ENCODE measurements at regions of chr16 and their contacts with region 1.

Region 1: DNA sequence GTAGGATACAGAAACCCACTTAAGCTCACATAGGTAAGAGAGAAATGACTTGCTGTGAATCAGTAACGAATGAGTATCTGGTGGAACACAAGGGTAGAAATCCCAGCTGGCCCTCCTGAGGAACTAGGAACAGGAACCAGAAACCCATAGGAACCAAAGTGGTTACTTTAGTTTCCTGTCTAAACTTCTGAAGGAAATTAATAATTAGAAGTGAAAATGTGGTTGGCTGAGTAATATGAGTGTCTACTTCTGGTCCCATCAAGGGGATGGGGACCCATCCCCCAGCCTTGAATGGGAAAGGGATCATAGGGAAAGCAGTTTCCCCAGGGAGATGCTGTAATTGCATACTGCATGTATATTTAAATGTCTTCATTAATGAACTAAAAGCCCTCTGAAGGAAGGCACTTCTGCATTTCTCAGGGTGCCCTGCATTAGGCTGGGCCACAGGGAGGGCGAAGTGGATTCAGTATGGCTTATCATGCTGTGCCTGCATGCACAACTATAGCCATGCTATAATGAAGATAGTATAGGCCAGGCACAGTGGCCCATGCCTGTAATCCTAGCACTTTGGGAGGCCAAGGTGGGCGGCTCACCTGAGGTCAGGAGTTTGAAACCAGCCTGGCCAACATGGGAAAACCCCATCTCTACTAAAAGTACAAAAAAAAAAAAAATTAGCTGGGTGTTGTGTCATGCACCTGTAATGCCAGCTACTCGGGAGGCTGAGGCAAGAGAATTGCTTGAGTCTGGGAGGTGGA is 45.6 kb downstream of the CYB5B start:
- DNase-seq: no peak
- ATAC-seq: no peak
- H3K4me3 ChIP-seq: no peak overlapping the region
- H3K4me3 Mint-ChIP-seq: no peak overlapping the region
- H3K27ac ChIP-seq: no peak overlapping the region
- H3K27ac Mint-ChIP-seq: peak overlapping the region in 1 of 2 donors; percentile 39
- H3K4me1 ChIP-seq: peaks cover 0 to 12% of the 10 kb centered on the region in 2 experiments
- H3K4me1 Mint-ChIP-seq: peaks cover 8 to 43% (median 34%) of the 10 kb centered on the region in 3 donors
- H3K27me3 ChIP-seq: no peaks in the 10 kb centered on the region
- H3K27me3 Mint-ChIP-seq: no peaks in the 10 kb centered on the region

Region 2: GRCh38 chr16:68800257-68800875 is 669.6 kb before region 1 on chr16:
- CTCF ChIA-PET with region 1: no interaction called
- POLR2A ChIA-PET with region 1: interaction called in 1 of 2 experiments, 18 read pairs
- DNase-seq: peak in 31 of 35 experiments; percentile 3 to 52 (median 24)
- ATAC-seq: peak in 3 of 4 experiments; percentile 51 to 75 (median 71)
- H3K4me3 ChIP-seq: no peak overlapping the region
- H3K4me3 Mint-ChIP-seq: no peak overlapping the region
- H3K27ac ChIP-seq: no peak overlapping the region
- H3K27ac Mint-ChIP-seq: no peak overlapping the region
- H3K4me1 ChIP-seq: no peaks in the 10 kb centered on the region
- H3K4me1 Mint-ChIP-seq: no peaks in the 10 kb centered on the region
- H3K27me3 ChIP-seq: no peaks in the 10 kb centered on the region
- H3K27me3 Mint-ChIP-seq: no peaks in the 10 kb centered on the region

Region 3: DNA sequence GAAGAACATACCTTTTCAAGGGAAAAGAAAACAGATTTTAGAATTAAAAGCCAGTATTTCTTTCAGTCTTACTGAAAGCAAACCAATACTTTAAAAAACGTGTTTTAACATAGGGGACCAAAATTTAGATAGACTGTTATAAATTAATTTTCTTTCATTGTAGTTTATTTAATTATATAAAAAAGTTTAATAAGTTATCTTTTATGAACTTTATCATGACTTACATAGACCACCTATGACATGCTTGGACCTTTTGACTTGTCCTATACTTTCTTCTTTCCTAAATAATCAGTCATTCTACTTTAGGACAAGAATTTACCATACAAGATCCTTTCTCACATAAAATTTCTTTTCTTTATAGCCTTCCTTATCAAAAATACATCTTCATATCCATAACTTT is 466.5 kb before region 1 on chr16:
- CTCF ChIA-PET with region 1: no interaction called
- POLR2A ChIA-PET with region 1: no interaction called
- DNase-seq: no peak
- ATAC-seq: no peak
- H3K4me3 ChIP-seq: no peak overlapping the region
- H3K4me3 Mint-ChIP-seq: no peak overlapping the region
- H3K27ac ChIP-seq: no peak overlapping the region
- H3K27ac Mint-ChIP-seq: no peak overlapping the region
- H3K4me1 ChIP-seq: no peaks in the 10 kb centered on the region
- H3K4me1 Mint-ChIP-seq: no peaks in the 10 kb centered on the region
- H3K27me3 ChIP-seq: no peaks in the 10 kb centered on the region
- H3K27me3 Mint-ChIP-seq: no peaks in the 10 kb centered on the region

Region 4: DNA sequence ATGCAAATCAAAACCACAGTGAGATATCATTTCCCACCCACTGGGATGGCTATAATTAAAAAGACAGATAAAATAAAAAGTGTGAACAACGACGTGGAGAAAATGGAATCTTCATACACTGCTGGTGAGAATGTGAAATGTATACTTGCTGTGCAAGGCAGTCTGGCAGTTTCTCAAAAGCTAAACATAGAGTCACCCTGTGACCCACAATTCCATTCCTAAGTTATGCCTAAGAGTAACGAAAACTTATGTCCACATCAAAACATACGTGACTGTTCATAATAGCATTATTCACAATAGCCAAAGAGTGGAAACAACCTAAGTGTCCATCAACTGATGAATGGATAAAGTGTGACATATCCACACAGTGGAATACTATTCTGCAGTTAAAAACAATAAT is 197.0 kb before region 1 on chr16:
- CTCF ChIA-PET with region 1: no interaction called
- POLR2A ChIA-PET with region 1: no interaction called
- DNase-seq: no peak
- ATAC-seq: no peak
- H3K4me3 ChIP-seq: no peak overlapping the region
- H3K4me3 Mint-ChIP-seq: no peak overlapping the region
- H3K27ac ChIP-seq: no peak overlapping the region
- H3K27ac Mint-ChIP-seq: no peak overlapping the region
- H3K4me1 ChIP-seq: no peaks in the 10 kb centered on the region
- H3K4me1 Mint-ChIP-seq: peaks cover 0 to 2% (median 0%) of the 10 kb centered on the region in 3 donors
- H3K27me3 ChIP-seq: no peaks in the 10 kb centered on the region
- H3K27me3 Mint-ChIP-seq: no peaks in the 10 kb centered on the region

Region 5: DNA sequence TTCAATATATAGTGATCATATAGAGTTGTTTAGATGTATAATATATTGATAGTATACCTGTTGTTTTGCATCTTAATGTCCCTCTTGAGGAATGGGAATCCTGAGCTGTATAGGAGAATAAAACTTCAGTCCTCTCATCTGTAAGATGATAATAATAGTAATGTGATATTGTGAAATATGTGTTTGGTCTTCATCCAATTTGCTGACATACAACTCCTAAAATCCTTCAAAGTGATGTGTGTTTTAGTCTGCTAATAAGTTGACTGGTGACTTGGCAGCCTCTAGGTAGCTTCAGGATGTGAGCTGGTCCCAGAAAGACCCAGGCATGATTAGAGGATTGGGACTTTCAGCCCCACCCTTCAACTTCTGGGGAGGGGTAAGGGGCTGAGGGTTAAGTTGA is 73.0 kb after region 1 on chr16:
- CTCF ChIA-PET with region 1: no interaction called
- POLR2A ChIA-PET with region 1: no interaction called
- DNase-seq: no peak
- ATAC-seq: no peak
- H3K4me3 ChIP-seq: no peak overlapping the region
- H3K4me3 Mint-ChIP-seq: no peak overlapping the region
- H3K27ac ChIP-seq: no peak overlapping the region
- H3K27ac Mint-ChIP-seq: no peak overlapping the region
- H3K4me1 ChIP-seq: no peaks in the 10 kb centered on the region
- H3K4me1 Mint-ChIP-seq: no peaks in the 10 kb centered on the region
- H3K27me3 ChIP-seq: no peaks in the 10 kb centered on the region
- H3K27me3 Mint-ChIP-seq: no peaks in the 10 kb centered on the region

Region 6: GRCh38 chr16:69917739-69918138 is 447.8 kb after region 1 on chr16:
- CTCF ChIA-PET with region 1: no interaction called
- POLR2A ChIA-PET with region 1: no interaction called
- DNase-seq: no peak
- ATAC-seq: no peak
- H3K4me3 ChIP-seq: no peak overlapping the region
- H3K4me3 Mint-ChIP-seq: no peak overlapping the region
- H3K27ac ChIP-seq: no peak overlapping the region
- H3K27ac Mint-ChIP-seq: no peak overlapping the region
- H3K4me1 ChIP-seq: no peaks in the 10 kb centered on the region
- H3K4me1 Mint-ChIP-seq: no peaks in the 10 kb centered on the region
- H3K27me3 ChIP-seq: no peaks in the 10 kb centered on the region
- H3K27me3 Mint-ChIP-seq: no peaks in the 10 kb centered on the region

Measured in T-cell (primary cell).